Activated CD4-positive, alpha-beta memory T cell treated with anti-CD3 and anti-CD28 coated beads for 36 hours (primary cell): ENCODE measurements at regions of chr6 and their contacts with region 1.

Region 1: DNA sequence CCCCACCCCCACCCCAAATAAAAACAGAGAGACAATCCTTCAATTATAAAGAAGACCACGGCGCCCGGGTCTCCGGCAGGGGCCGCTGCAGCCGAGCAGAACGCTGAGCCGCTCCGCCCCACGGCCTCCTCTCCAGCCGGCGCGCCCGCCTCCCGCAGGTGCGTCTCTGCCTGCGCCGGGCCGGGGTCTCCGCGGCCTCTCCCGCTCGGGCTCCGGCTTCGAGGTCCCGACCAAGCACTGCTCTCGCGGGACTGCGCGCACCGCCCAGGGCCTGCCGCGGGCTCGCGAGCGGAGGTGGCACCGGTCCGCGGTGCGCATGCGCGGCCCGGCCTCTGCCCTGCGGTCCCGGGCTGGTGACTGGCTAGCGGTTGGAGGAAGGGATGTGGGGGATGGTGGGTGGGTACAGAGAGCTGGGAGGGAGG is 241 bp upstream of the SIRT5 start:
- DNase-seq: peak; percentile 94
- H3K4me3 Mint-ChIP-seq: peak overlapping the region; percentile 98
- H3K27ac Mint-ChIP-seq: peak overlapping the region; percentile 100
- H3K4me1 Mint-ChIP-seq: peaks cover 13% of the 10 kb centered on the region
- H3K27me3 Mint-ChIP-seq: no peaks in the 10 kb centered on the region

Region 2: DNA sequence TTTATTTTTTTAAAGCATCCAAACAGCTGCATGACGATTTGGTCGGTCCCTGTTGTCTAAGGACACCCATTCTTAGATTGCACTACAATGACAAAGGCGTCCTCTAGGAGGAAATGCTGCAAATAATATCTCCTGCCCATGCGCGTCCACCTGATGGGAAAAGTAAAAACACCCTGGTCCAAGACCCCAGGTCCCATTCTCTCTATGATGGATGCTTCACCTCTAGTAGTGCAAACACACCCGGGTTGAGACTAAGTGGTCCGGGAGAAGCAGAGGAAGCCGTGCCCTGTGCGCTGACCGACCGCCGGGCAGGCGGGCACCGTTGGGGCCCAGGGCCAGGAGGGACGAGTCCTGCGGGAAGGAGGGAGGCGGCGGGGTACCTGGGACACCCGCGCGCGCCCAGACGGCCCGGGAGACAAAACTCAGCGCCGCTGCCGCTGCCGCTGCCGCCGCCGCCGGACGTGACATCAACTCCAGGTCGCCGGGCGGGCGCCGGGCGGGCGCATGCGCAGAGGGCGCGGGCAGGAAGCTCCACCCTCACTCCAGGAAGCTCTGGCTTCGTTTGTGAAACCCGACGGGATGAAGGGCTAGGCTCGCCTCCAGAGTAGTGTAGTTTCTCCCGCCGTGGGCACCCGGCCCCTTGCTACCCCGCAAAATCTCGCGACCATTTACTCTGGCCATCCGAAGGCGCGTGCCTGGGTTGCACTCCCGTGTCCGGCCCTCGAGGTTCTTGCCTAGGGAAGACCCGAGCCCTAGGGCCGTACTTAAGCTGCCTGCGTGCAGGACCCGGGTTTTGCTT is 245.9 kb before region 1 on chr6 and contains the start of gene TBC1D7:
- CTCF ChIA-PET with region 1: interaction called, 54 read pairs
- POLR2A ChIA-PET with region 1: interaction called, 39 read pairs
- intact Hi-C with region 1: loop called (anchors 1 kb)
- DNase-seq: peak; percentile 96
- H3K4me3 Mint-ChIP-seq: peak within 1 kb of the TSS; percentile 90
- H3K27ac Mint-ChIP-seq: peak within 1 kb of the TSS; percentile 90
- H3K4me1 Mint-ChIP-seq: peaks cover 20% of the 10 kb centered on the region
- H3K27me3 Mint-ChIP-seq: no peaks in the 10 kb centered on the region
- total RNA-seq, gene TBC1D7: 20.6 to 21.7 TPM

Region 3: DNA sequence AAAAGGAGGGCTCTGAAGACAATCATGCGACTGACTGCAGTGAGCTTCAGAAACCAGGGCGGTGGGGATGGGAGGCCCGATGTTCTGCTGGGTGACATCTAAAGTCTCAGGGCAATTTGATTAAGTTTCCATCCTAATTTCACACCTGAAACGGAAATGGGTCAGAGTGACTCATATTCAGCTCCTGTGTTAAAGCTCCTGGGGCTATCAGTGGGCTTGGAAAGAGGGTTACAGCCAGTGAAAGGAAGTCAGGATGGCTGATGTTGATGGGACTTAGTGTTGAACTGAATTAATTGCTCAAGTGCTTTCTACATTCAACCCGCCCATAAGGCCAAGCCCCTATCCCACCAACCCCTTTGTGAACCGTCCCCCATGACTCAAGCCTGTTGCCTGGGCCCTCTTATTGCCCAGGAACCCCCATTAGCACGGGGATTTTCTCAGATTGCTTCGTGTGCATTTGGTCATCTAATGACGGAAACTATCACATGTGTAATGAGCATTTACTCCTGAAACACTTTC is 198.7 kb before region 1 on chr6:
- CTCF ChIA-PET with region 1: interaction called, 6 read pairs
- POLR2A ChIA-PET with region 1: interaction called, 3 read pairs
- intact Hi-C with region 1: loop called (anchors 1 kb)
- DNase-seq: peak; percentile 72
- H3K4me3 Mint-ChIP-seq: no peak overlapping the region
- H3K27ac Mint-ChIP-seq: no peak overlapping the region
- H3K4me1 Mint-ChIP-seq: peaks cover 20% of the 10 kb centered on the region
- H3K27me3 Mint-ChIP-seq: no peaks in the 10 kb centered on the region

Region 4: DNA sequence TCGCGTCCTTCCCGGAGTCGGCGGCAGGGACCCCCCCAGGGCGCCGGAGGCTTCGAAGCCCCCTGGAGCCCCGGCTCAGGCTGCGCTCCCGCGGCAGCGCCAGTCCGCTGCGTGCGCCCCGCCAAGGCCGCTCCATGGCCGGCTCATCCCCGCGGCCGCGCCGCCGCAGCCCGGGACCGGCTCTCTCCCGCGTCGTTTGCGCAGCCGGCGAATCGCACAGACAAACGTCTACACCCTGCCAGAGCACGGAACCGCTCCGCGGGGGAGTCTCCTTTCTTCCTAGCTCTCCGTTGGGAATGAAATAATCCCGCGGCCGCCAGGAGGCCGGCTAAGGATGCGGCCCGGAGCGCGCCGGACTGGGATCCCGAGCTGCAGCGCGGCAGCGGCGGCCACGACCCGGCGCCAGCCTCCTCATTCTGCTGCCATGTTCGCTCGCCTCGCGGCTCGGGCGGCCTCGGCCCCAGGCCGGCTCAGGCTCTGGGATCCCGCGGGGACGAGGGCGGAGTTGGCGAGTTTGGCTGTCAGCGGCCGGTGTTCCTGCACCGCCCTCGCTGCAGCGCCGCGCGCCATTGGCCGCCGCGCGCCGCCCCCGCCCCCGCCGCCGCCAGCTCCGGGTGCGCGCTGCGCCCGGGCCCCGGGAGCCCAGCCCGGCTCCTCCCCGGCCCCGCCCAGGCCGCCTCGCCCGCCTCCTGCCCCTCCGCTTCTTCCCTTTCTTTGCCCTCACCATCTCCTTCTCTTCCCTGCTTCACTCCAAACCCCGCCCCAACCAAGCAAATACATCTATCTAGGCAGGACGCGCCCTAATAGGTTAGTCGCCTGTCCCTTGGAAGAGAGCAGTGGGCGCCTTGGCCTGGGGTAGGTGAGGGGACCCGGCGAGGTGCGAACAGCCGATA is 86.8 kb before region 1 on chr6 and contains the start of gene GFOD1:
- CTCF ChIA-PET with region 1: interaction called, 19 read pairs
- POLR2A ChIA-PET with region 1: interaction called, 10 read pairs
- intact Hi-C with region 1: loop called (anchors 1 kb)
- DNase-seq: peak; percentile 82
- H3K4me3 Mint-ChIP-seq: peak within 1 kb of the TSS; percentile 73
- H3K27ac Mint-ChIP-seq: peak within 1 kb of the TSS; percentile 15
- H3K4me1 Mint-ChIP-seq: peaks cover 29% of the 10 kb centered on the region
- H3K27me3 Mint-ChIP-seq: peaks cover 13% of the 10 kb centered on the region
- total RNA-seq, gene GFOD1: 2.3 to 2.4 TPM

Region 5: GRCh38 chr6:13614926-13615798 is 41.0 kb after region 1 on chr6 and contains the start of gene NOL7:
- CTCF ChIA-PET with region 1: interaction called, 76 read pairs
- POLR2A ChIA-PET with region 1: interaction called, 29 read pairs
- intact Hi-C with region 1: loop called (anchors 1 kb)
- DNase-seq: peak; percentile 99
- H3K4me3 Mint-ChIP-seq: peak within 1 kb of the TSS; percentile 87
- H3K27ac Mint-ChIP-seq: peak within 1 kb of the TSS; percentile 92
- H3K4me1 Mint-ChIP-seq: peaks cover 44% of the 10 kb centered on the region
- H3K27me3 Mint-ChIP-seq: no peaks in the 10 kb centered on the region
- total RNA-seq, gene NOL7: 88.0 to 94.9 TPM

Region 6: DNA sequence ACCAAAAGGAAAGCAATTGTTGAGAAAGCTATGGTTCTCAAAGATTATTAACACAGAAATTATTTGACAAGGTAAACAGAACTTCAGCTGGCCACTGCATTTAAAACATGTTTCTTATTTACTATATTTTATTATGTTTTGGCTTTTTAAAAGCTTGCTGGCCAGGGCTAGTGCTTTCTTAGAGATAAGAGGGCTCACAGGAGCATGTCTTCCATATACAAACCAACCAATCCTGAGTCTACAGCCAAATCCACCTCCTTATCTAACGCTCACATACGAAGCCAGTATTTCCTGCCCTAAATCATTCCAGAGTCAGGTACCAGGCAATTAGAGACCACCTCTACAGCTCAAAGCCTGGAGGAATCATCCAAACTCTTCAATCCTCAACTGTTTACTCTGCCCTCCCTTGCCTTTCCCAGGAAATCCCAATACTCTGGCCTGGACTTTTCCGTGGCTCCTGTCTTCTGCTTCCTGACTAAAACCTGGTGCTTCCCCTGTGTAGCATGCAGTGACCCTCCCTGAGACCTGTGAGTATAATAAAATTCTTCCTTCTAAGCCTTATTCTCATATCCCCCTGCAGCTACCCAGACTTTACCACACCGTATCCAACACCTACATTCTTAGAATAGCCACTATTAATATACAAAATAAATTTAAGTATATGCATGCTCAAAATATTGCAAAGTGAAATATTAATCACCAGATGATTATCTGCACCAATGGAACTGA is 104.3 kb after region 1 on chr6:
- CTCF ChIA-PET with region 1: no interaction called
- POLR2A ChIA-PET with region 1: no interaction called
- intact Hi-C with region 1: no loop called
- DNase-seq: no peak
- H3K4me3 Mint-ChIP-seq: no peak overlapping the region
- H3K27ac Mint-ChIP-seq: no peak overlapping the region
- H3K4me1 Mint-ChIP-seq: peaks cover 53% of the 10 kb centered on the region
- H3K27me3 Mint-ChIP-seq: no peaks in the 10 kb centered on the region

Region 7: GRCh38 chr6:14075095-14075503 is 500.9 kb after region 1 on chr6:
- CTCF ChIA-PET with region 1: interaction called, 3 read pairs
- POLR2A ChIA-PET with region 1: no interaction called
- intact Hi-C with region 1: loop called (anchors 10 kb)
- DNase-seq: no peak
- H3K4me3 Mint-ChIP-seq: peak overlapping the region; percentile 68
- H3K27ac Mint-ChIP-seq: peak overlapping the region; percentile 81
- H3K4me1 Mint-ChIP-seq: peaks cover 56% of the 10 kb centered on the region
- H3K27me3 Mint-ChIP-seq: no peaks in the 10 kb centered on the region